ENCODE measurements at regions of chr21 and their contacts with region 1.

Region 1: GRCh38 chr21:20570824-20571232 is 427.4 kb upstream of the NCAM2 start:
- DNase-seq: no peak
- ATAC-seq: no peak
- H3K4me3 Mint-ChIP-seq: no peak overlapping the region
- H3K27ac Mint-ChIP-seq: no peak overlapping the region
- H3K4me1 Mint-ChIP-seq: no peaks in the 10 kb centered on the region
- H3K27me3 Mint-ChIP-seq: no peaks in the 10 kb centered on the region

Region 2: DNA sequence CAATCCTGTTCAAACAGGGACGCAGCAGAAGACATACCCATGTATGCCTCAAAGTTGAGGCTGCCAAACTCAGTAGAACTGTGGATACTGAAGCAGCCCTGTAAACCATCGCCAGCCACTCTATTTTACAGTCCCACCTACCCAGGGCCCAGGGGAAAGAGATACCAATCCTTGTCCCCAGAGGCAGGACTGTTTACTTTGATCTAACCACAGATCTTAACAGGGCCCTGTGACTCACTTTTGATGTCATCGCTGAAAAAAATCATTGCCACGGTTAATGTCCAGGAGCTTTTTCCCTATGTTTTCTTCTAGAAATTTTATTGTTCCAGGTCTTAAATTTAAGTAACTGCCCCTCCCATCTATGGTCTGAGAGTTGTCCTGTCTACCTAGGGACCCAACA is 111.0 kb before region 1 on chr21:
- CTCF ChIA-PET with region 1: no interaction called
- POLR2A ChIA-PET with region 1: no interaction called
- intact Hi-C with region 1: no loop called
- DNase-seq: no peak
- ATAC-seq: no peak
- H3K4me3 Mint-ChIP-seq: no peak overlapping the region
- H3K27ac Mint-ChIP-seq: no peak overlapping the region
- H3K4me1 Mint-ChIP-seq: no peaks in the 10 kb centered on the region
- H3K27me3 Mint-ChIP-seq: no peaks in the 10 kb centered on the region

Region 3: DNA sequence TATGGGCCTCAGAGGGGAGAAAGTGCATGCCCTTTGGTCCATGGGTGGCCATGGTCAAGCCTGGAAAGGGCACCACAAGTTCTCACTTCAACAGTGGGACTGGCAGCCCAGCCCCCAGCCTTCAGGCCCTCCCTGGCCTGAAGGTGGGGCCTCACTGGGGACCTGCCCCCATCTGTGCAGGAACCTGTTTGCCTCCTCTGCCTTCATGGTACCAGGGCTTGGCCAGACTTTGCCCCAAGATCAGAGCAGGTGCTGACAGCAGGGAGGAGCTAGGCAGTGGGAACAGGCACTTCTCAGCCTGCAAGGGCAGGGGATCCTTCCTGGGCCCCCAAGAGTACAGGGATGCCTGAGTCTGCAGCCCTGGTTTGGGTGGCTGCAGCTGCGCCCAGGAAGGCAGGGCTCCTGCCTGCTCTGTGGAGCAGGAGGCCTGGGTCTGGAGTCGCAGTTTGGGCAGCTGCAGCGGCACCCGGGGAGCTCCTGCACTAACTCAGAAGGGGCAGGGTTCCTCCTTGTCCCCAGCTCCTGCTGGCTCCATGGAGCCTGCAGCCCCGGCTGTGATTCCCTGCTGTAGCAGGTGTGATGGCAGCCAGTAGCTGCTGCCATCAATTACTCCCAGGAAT is 32.7 kb before region 1 on chr21:
- CTCF ChIA-PET with region 1: no interaction called
- POLR2A ChIA-PET with region 1: no interaction called
- intact Hi-C with region 1: no loop called
- DNase-seq: no peak
- ATAC-seq: no peak
- H3K4me3 Mint-ChIP-seq: no peak overlapping the region
- H3K27ac Mint-ChIP-seq: no peak overlapping the region
- H3K4me1 Mint-ChIP-seq: no peaks in the 10 kb centered on the region
- H3K27me3 Mint-ChIP-seq: no peaks in the 10 kb centered on the region

Region 4: DNA sequence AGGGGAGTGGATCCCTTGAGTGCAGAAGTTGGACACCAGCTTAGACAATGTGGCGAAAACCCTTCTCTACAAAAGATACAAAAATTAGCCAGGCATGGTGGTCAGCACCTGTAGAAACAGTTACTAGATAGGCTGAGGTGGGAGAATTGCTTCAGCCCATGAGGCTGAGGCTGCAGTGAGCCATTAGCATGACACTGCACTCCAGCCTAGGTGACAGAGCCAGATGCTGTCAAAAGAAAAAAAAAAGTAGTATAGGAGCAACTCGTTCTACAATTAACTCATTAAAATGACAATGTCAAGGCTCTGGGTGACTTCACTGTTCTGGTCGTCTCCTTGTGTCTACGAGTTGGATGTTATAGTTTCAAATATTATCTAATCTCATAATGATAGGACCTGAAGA is 56.8 kb after region 1 on chr21:
- CTCF ChIA-PET with region 1: no interaction called
- POLR2A ChIA-PET with region 1: no interaction called
- intact Hi-C with region 1: loop called in 1 of 2 experiments (anchors 5 kb)
- DNase-seq: no peak
- ATAC-seq: no peak
- H3K4me3 Mint-ChIP-seq: no peak overlapping the region
- H3K27ac Mint-ChIP-seq: no peak overlapping the region
- H3K4me1 Mint-ChIP-seq: no peaks in the 10 kb centered on the region
- H3K27me3 Mint-ChIP-seq: no peaks in the 10 kb centered on the region